Heart right ventricle (tissue), 16 donors: ENCODE measurements at regions of chr2 and their contacts with region 1.

Region 1: DNA sequence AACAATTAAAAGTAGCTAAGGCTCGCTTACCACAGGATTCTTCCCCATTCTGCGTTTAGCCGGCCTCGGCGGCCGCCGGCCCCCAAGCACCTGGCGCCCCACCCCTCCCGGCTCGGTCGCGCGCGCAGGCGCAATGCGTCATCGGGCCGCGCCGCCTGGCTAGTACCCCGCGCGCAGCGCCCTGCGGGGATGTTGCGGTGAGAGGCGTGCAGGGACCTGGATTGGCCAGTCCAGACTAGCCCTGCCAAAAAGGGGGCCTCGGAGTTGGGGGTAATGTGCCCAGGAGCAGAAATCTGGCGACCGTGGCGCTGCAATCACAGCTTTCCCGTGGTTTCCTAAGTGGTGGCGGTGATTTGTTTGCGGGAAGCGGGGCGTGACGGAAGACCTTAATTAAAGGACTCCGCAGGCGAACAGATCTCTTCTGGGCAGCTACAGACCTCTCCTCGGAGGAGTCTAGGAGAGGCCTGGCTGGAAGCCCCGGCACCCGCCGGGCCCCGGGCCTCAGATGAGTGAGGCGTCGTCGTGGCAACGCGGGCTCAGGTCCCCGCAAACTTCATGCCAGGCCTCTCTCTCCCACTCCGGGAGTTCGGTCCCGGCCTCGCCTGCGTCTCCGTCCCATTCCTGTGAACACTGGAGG is 606 bp downstream of the TMEM237 start:
- DNase-seq: peak; percentile 76 to 84
- ATAC-seq: peak; percentile 91 to 97 (median 95)
- H3K4me3 ChIP-seq: peak overlapping the region; percentile 76 to 97 (median 88)
- H3K27ac ChIP-seq: peak overlapping the region; percentile 76 to 96 (median 93)
- H3K4me1 ChIP-seq: peaks cover 0 to 22% (median 12%) of the 10 kb centered on the region in 9 donors
- H3K27me3 ChIP-seq: no peaks in the 10 kb centered on the region
- CTCF ChIP-seq: peak in 2 of 9 donors; percentile 32 to 46

Region 2: GRCh38 chr2:201406077-201406662 is 236.5 kb before region 1 on chr2:
- intact Hi-C with region 1: loop called in 1 of 10 experiments (anchors 10 kb)
- DNase-seq: peak in 1 of 2 donors; percentile 61
- ATAC-seq: peak in 7 of 8 donors; percentile 29 to 68 (median 52)
- H3K4me3 ChIP-seq: peak overlapping the region; percentile 2 to 40 (median 30)
- H3K27ac ChIP-seq: peak overlapping the region; percentile 54 to 87 (median 73)
- H3K4me1 ChIP-seq: peaks cover 0 to 95% (median 60%) of the 10 kb centered on the region in 9 donors
- H3K27me3 ChIP-seq: no peaks in the 10 kb centered on the region
- CTCF ChIP-seq: no peak

Region 3: GRCh38 chr2:201484805-201485204 is 157.9 kb before region 1 on chr2:
- intact Hi-C with region 1: no loop called
- DNase-seq: no peak
- ATAC-seq: no peak
- H3K4me3 ChIP-seq: no peak overlapping the region
- H3K27ac ChIP-seq: no peak overlapping the region
- H3K4me1 ChIP-seq: no peaks in the 10 kb centered on the region
- H3K27me3 ChIP-seq: no peaks in the 10 kb centered on the region
- CTCF ChIP-seq: no peak

Region 4: DNA sequence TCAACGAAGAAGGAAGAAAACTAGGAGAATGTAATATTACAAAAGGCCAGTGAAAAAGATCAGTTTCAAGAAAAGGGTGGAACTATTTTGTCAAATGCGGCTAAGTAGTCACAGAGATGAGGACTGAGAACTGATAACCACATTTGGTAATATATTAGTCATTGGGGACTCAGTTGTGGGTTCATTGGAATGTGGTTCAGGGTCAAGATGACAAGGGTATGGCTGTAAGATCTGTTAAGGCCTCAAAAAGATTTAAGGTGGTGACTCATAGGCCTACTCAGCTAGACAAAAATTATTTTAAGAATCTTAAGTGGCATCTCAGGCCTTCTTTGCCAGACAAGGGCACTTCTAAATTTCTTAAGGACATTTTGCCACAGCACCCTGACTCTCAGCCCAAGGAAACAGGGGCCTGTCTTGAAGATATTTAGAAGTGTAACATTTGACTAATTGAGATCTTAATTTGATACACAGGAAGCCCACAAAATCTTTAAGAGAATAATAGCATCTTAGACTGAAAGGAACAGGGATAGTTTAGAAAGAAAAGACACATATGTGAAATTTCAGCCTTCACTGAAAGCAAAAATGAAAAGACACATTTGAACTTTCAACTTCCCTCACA is 109.9 kb before region 1 on chr2:
- intact Hi-C with region 1: no loop called
- DNase-seq: no peak
- ATAC-seq: no peak
- H3K4me3 ChIP-seq: no peak overlapping the region
- H3K27ac ChIP-seq: no peak overlapping the region
- H3K4me1 ChIP-seq: no peaks in the 10 kb centered on the region
- H3K27me3 ChIP-seq: no peaks in the 10 kb centered on the region
- CTCF ChIP-seq: no peak